Motor neuron (in vitro differentiated cells): ENCODE measurements at regions of chr2 and their contacts with region 1.

Region 1: GRCh38 chr2:133780099-133780839 is 212.0 kb upstream of the NCKAP5 start:
- ATAC-seq: peak; percentile 55 to 86 (median 66)
- H3K4me3 ChIP-seq: no peak overlapping the region
- H3K27ac ChIP-seq: no peak overlapping the region
- H3K4me1 ChIP-seq: no peaks in the 10 kb centered on the region

Region 2: GRCh38 chr2:133266041-133266925 is 514.0 kb before region 1 on chr2:
- in situ Hi-C with region 1: loop called in 1 of 9 experiments (anchors 25 kb)
- ATAC-seq: peak; percentile 55 to 79 (median 61)
- H3K4me3 ChIP-seq: peak overlapping the region; percentile 44 to 53 (median 48)
- H3K27ac ChIP-seq: peak overlapping the region; percentile 34 to 71
- H3K4me1 ChIP-seq: peaks cover 16 to 28% of the 10 kb centered on the region in 2 donors

Region 3: DNA sequence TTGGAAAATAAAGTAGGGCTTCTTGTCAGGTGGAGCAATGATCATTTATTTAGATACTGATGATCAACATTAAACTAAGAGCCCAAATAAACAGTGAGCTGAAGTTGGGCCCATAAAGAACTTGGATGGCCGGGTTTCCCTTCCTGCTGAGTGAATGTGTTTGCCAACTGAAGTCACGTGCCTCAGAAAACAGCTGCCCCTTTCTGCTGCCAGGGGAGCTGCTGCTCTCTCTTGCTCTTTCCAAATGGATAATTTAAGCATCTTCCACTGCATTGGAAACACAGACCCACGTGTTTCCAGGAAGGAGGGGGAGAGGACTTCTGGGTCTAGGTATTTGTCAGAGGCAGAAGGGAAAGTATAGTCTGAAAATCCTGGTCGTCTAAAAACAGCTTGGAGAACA is 189.1 kb before region 1 on chr2:
- in situ Hi-C with region 1: loop called in 2 of 9 experiments (anchors 25 kb)
- ATAC-seq: peak in 3 of 8 experiments; percentile 24 to 65 (median 36)
- H3K4me3 ChIP-seq: no peak overlapping the region
- H3K27ac ChIP-seq: no peak overlapping the region
- H3K4me1 ChIP-seq: peaks cover 0 to 4% of the 10 kb centered on the region in 2 donors